ENCODE measurements at regions of chr19 and their contacts with region 1.

Region 1: GRCh38 chr19:49443366-49444099 is 2.2 kb upstream of the SLC17A7 start:
- DNase-seq: peak; percentile 95 to 97
- ATAC-seq: peak; percentile 91 to 95 (median 94)
- H3K4me3 ChIP-seq: peak overlapping the region; percentile 77
- H3K27ac ChIP-seq: peak overlapping the region; percentile 63
- H3K4me1 ChIP-seq: peaks cover 5% of the 10 kb centered on the region
- H3K27me3 ChIP-seq: peaks cover 0 to 36% (median 21%) of the 10 kb centered on the region in 3 donors
- CTCF ChIP-seq: peak; percentile 77

Region 2: DNA sequence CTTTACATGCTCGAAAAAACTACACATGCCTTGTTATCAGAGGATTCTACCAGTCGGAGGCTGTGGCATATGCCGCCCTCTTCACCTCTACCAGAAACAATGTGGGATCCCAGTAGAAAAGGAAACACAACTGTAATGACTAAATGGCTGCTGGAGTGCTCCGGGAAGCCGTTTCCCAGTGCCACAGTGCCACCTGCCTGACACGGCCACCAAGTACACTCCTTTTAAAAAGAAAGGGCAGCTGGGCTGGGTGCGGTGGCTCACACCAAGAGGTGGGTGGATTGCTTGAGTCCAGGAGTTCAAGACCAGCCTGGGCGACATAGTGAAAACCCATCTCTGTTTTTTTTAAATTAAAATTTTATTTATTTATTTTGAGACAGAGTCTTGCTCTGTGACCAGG is 218.7 kb before region 1 on chr19:
- intact Hi-C with region 1: loop called in 1 of 2 experiments (anchors 5 kb)
- DNase-seq: peak in 1 of 2 donors; percentile 37
- ATAC-seq: peak; percentile 78 to 87 (median 83)
- H3K4me3 ChIP-seq: no peak overlapping the region
- H3K27ac ChIP-seq: no peak overlapping the region
- H3K4me1 ChIP-seq: no peaks in the 10 kb centered on the region
- H3K27me3 ChIP-seq: no peaks in the 10 kb centered on the region
- CTCF ChIP-seq: peak; percentile 50

Region 3: GRCh38 chr19:49391581-49392399 is 51.7 kb before region 1 on chr19:
- intact Hi-C with region 1: loop called (anchors 1 to 2 kb)
- DNase-seq: peak; percentile 77 to 88
- ATAC-seq: peak; percentile 85 to 88 (median 86)
- H3K4me3 ChIP-seq: no peak overlapping the region
- H3K27ac ChIP-seq: no peak overlapping the region
- H3K4me1 ChIP-seq: no peaks in the 10 kb centered on the region
- H3K27me3 ChIP-seq: peaks cover 0 to 6% (median 5%) of the 10 kb centered on the region in 3 donors
- CTCF ChIP-seq: peak; percentile 81

Region 4: GRCh38 chr19:49555600-49556411 is 112.3 kb after region 1 on chr19:
- intact Hi-C with region 1: no loop called
- DNase-seq: peak; percentile 62 to 85
- ATAC-seq: peak; percentile 46 to 70 (median 56)
- H3K4me3 ChIP-seq: no peak overlapping the region
- H3K27ac ChIP-seq: peak overlapping the region; percentile 36
- H3K4me1 ChIP-seq: peaks cover 14% of the 10 kb centered on the region
- H3K27me3 ChIP-seq: no peaks in the 10 kb centered on the region
- CTCF ChIP-seq: no peak

Measured in psoas muscle (tissue), 8 donors.